ENCODE measurements at regions of chr3 and their contacts with region 1.

Region 1: DNA sequence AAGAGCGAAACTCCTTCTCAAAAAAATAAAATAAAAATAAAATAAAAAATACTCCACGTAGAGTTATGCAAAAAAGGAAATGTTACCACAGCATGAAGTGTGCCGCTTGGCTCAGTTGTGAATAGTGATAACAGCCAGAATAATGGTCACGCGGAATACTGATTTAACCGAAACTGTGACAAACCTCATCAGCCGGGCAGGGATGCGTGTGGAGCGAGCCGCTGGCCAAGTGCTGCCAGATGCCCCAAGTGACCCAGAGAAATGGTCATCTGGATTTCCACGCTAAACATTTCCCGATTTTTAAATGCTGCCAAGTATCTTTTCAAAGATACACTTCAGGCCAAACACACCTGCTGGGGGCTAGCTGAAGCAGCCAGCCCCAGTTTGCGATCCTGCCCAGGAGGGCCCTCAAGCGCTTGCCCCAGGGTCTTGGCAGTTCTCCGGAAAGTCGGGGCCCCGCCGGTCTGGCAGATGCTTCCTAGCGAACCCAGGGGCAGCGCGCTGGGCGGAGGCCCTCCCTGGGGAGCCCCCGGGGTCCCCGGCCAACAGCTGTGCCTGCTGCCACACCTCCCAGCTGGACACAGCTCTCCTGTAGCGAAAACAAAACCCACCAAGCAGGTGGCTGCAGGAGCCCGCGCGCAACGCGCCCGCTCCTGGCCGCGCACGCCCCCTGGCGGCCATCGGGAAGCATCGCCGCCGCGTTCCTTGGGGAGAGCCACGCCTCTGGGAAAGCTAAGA is 35.1 kb downstream of the CMTM6 start:
- DNase-seq: peak; percentile 56 to 79
- H3K4me3 ChIP-seq: no peak overlapping the region
- H3K4me1 ChIP-seq: no peaks in the 10 kb centered on the region
- H3K27me3 ChIP-seq: no peaks in the 10 kb centered on the region

Region 2: DNA sequence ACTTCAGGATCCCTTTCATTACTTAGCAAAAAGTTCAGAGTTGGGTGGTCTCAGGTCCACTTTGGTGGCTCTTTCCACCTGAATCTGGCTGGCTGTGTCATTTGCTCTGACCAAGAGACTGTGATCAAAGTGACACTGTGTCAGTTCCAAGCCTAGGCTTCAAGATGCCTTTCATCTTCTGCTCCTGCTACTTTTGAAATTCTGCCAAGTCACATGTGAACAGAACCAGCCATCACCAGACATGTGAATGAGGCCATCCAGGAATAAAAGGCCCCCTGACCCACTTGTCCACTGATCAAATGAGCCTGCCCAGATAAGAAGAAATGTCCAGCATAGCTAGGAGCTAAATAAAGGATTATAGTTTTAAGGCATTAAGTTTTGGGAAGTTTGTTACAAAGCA is 618.6 kb before region 1 on chr3:
- in situ Hi-C with region 1: no loop called
- DNase-seq: no peak
- H3K4me3 ChIP-seq: no peak overlapping the region
- H3K4me1 ChIP-seq: no peaks in the 10 kb centered on the region
- H3K27me3 ChIP-seq: no peaks in the 10 kb centered on the region

Region 3: GRCh38 chr3:32184187-32184730 is 283.2 kb before region 1 on chr3:
- in situ Hi-C with region 1: loop called (anchors 5 kb)
- DNase-seq: peak in 1 of 2 experiments; percentile 74
- H3K4me3 ChIP-seq: no peak overlapping the region
- H3K4me1 ChIP-seq: peaks cover 8% of the 10 kb centered on the region
- H3K27me3 ChIP-seq: no peaks in the 10 kb centered on the region

Region 4: DNA sequence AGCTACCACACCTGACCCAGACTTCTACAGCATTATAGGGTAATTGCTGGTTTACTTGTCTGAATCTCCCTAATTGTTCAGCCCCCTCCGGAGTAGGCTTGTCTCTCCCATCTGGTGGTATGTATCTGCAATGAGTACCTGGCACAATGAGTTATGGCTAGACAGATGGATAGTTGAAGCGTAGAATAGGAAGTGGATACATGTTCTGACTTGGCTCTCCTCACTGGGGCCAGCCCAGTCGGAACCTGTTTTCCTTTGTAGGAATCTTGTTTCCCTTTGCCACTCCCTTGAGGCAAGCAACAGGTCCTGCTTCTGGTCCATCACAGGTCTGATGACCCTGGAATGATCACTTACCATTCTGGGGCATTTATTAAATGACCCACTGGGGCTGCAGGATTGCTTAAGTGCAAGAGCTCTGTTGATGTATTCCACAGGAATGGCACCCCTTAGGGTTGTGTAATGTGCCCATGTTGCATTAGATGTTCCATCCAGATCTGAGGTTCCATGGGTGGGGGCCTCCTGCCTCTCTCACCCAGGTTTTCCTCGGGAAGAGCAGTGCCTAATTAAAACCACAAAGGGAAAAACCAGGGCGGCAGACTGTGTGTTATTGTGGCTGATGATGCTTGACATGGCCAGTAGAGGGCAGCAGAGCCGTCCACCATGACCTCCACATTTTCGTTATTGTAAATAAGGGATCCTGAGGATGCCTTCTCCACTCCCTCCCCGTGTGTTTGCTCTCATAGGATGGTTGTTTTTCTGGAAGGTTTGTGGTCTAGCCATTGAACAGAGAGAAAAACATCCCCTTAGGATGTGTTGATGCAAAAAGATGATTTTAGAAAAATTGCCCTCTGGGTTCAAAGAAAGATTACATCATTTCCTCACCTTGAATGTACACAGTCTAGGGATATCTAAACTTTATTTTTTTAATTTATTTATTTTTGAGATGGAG is 171.0 kb before region 1 on chr3:
- in situ Hi-C with region 1: loop called (anchors 10 kb)
- DNase-seq: peak; percentile 75 to 76
- H3K4me3 ChIP-seq: no peak overlapping the region
- H3K4me1 ChIP-seq: no peaks in the 10 kb centered on the region
- H3K27me3 ChIP-seq: no peaks in the 10 kb centered on the region

Measured in HAP-1 (cell line).